ENCODE measurements at regions of chr14 and their contacts with region 1.

Region 1: GRCh38 chr14:103104654-103105452 is 10.3 kb downstream of the EXOC3L4 start:
- DNase-seq: peak; percentile 74
- H3K4me3 Mint-ChIP-seq: no peak overlapping the region
- H3K27ac Mint-ChIP-seq: no peak overlapping the region
- H3K4me1 Mint-ChIP-seq: peaks cover 7% of the 10 kb centered on the region
- H3K27me3 Mint-ChIP-seq: peaks cover 28% of the 10 kb centered on the region

Region 2: GRCh38 chr14:102351026-102351425 is 753.8 kb before region 1 on chr14:
- CTCF ChIA-PET with region 1: no interaction called
- POLR2A ChIA-PET with region 1: no interaction called
- intact Hi-C with region 1: no loop called
- DNase-seq: no peak
- H3K4me3 Mint-ChIP-seq: no peak overlapping the region
- H3K27ac Mint-ChIP-seq: no peak overlapping the region
- H3K4me1 Mint-ChIP-seq: peaks cover 2% of the 10 kb centered on the region
- H3K27me3 Mint-ChIP-seq: no peaks in the 10 kb centered on the region

Region 3: DNA sequence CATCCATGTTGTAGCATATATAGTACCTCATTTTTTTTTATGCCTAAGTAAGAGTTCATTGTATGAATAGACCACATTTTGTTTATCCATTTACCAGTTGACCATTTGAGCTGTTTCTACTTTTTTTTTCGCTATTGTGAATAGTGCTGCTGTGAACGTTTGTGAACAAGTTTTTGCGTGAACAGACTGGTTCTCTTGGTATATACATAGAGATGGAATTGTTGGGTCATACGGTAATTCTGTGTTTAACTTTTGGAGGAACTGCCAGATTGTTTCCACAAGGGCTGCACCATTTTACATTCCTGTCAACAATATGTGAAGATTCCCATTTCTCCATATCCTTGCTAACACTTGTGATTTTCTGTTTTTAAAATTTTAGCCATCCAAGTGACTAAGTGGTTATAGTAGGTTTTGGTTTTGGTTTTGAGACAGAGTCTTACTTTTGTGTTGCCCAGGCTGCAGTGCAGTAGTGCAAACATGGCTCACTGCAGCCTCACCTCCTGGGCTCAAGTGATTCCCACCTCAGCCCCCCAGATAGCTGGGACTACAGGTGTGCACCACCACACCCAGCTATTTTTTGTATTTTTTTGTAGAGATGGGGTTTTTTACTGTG is 250.7 kb before region 1 on chr14:
- CTCF ChIA-PET with region 1: no interaction called
- POLR2A ChIA-PET with region 1: no interaction called
- intact Hi-C with region 1: no loop called
- DNase-seq: no peak
- H3K4me3 Mint-ChIP-seq: no peak overlapping the region
- H3K27ac Mint-ChIP-seq: peak overlapping the region; percentile 39
- H3K4me1 Mint-ChIP-seq: peaks cover 22% of the 10 kb centered on the region
- H3K27me3 Mint-ChIP-seq: no peaks in the 10 kb centered on the region

Region 4: DNA sequence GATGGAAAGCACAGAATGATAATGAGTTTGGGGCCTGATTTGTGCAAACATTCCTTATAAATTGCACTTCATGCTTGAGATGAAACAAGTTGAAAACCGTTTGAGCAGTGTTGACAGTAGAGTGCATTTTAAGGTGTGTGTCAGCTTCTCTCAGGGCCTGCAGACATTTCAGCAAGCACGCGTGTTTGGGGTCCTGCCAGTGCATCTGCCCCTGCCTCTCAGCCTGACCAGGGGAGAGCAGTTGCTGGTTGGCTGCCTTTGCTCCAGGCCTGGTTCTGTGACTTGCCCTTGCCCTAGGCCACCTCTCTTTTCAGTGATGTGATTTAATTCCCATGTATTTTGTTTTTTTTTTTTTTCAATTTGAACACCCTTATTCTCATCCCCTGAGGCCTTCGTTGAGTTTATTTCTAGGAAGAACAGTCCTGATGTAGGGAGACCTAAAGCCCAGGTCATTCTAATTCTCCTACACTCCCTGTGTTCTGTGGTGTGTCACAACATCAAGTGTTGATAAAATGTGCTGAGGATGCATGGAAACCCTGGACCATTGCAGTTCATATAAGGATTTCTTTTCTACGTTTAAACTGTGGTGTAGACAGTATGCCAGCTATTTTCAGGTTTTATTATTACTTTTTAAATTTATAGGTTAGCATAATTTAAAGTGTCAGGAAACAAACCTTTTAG is 222.5 kb before region 1 on chr14:
- CTCF ChIA-PET with region 1: no interaction called
- POLR2A ChIA-PET with region 1: no interaction called
- intact Hi-C with region 1: no loop called
- DNase-seq: no peak
- H3K4me3 Mint-ChIP-seq: no peak overlapping the region
- H3K27ac Mint-ChIP-seq: peak overlapping the region; percentile 11
- H3K4me1 Mint-ChIP-seq: peaks cover 27% of the 10 kb centered on the region
- H3K27me3 Mint-ChIP-seq: no peaks in the 10 kb centered on the region

Region 5: GRCh38 chr14:103078093-103078749 is 26.6 kb before region 1 on chr14:
- CTCF ChIA-PET with region 1: interaction called, 31 read pairs
- POLR2A ChIA-PET with region 1: interaction called, 3 read pairs
- intact Hi-C with region 1: no loop called
- DNase-seq: peak; percentile 83
- H3K4me3 Mint-ChIP-seq: no peak overlapping the region
- H3K27ac Mint-ChIP-seq: no peak overlapping the region
- H3K4me1 Mint-ChIP-seq: no peaks in the 10 kb centered on the region
- H3K27me3 Mint-ChIP-seq: peaks cover 4% of the 10 kb centered on the region

Region 6: GRCh38 chr14:103130965-103131364 is 26.1 kb after region 1 on chr14:
- CTCF ChIA-PET with region 1: interaction called, 15 read pairs
- POLR2A ChIA-PET with region 1: no interaction called
- intact Hi-C with region 1: no loop called
- DNase-seq: no peak
- H3K4me3 Mint-ChIP-seq: no peak overlapping the region
- H3K27ac Mint-ChIP-seq: no peak overlapping the region
- H3K4me1 Mint-ChIP-seq: no peaks in the 10 kb centered on the region
- H3K27me3 Mint-ChIP-seq: peaks cover 5% of the 10 kb centered on the region

Region 7: GRCh38 chr14:103149351-103150237 is 44.7 kb after region 1 on chr14:
- CTCF ChIA-PET with region 1: interaction called, 16 read pairs
- POLR2A ChIA-PET with region 1: no interaction called
- intact Hi-C with region 1: no loop called
- DNase-seq: no peak
- H3K4me3 Mint-ChIP-seq: no peak overlapping the region
- H3K27ac Mint-ChIP-seq: no peak overlapping the region
- H3K4me1 Mint-ChIP-seq: no peaks in the 10 kb centered on the region
- H3K27me3 Mint-ChIP-seq: peaks cover 8% of the 10 kb centered on the region

Region 8: DNA sequence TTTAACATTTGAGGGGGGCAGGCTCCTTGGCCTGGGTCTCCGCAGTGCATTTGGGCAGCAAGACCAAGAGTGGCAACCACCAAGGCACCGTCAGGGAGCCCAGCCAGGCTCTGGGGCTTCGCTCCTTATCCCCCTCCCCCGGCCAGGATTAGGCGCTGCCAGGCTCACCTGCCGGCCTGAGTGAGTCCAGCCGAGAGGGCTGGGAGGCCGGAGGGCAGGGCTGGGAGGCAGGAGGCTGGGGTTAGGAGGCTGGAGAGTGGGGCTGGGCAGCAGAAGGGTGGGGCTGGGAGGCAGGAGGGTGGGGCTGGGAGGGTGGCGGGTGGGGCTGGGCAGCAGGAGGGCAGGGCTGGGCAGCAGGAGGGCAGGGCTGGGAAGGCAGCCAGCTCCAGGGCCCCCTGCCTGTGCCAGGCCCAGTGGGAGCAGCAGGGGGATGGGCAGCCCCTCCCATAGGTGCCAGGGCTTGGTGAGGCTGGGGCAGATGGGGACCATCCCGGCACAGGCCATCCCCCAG is 127.5 kb after region 1 on chr14:
- CTCF ChIA-PET with region 1: interaction called, 10 read pairs
- POLR2A ChIA-PET with region 1: no interaction called
- intact Hi-C with region 1: no loop called
- DNase-seq: no peak
- H3K4me3 Mint-ChIP-seq: no peak overlapping the region
- H3K27ac Mint-ChIP-seq: no peak overlapping the region
- H3K4me1 Mint-ChIP-seq: no peaks in the 10 kb centered on the region
- H3K27me3 Mint-ChIP-seq: peaks cover 17% of the 10 kb centered on the region

Region 9: DNA sequence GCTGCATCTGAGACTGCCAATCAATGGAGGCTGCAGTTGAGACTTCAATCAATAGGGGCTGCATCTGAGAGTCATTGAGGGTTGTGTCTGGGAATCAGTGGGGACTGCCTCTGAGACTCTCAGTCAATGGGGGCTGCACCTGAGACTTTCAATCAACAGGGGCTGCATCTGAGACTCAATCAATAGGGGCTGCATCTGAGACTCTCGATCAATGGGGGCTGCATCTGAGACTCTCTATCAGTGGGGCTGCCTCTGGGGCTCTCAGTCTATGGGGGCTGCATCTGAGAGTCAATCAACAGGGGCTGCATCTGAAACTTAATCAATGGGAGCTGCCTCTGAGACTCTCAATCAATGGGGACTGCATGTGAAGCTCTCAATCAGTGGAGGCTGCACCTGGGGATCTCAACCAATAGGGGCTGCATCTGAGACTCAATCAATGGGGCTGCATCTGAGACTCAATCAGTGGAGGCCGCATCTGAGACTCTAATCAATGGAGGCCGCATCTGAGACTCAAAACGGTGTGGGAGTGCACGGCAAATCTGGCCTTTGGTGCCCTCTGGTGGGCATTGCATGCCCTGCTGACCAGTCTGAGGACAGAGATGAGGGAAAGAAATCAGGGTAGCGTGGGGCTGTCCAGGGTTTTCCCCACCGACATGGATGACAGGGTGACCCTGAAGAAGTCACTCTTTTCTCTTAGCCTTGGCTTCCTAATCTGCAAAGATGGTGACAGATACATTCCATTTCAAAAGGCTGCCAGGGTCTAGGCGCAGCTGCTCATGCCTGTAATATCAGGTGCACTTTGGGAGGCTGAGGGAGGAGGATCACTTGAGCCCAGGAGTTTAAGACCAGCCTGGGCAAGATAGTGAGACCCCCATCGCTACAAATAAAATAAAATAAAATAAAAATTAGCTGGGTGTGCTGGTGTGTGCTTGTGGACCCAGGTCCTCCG is 187.8 kb after region 1 on chr14:
- CTCF ChIA-PET with region 1: interaction called, 101 read pairs
- POLR2A ChIA-PET with region 1: interaction called, 3 read pairs
- intact Hi-C with region 1: loop called (anchors 1 kb)
- DNase-seq: peak; percentile 85
- H3K4me3 Mint-ChIP-seq: no peak overlapping the region
- H3K27ac Mint-ChIP-seq: peak overlapping the region; percentile 28
- H3K4me1 Mint-ChIP-seq: peaks cover 4% of the 10 kb centered on the region
- H3K27me3 Mint-ChIP-seq: peaks cover 21% of the 10 kb centered on the region

Measured in activated CD4-positive, alpha-beta memory T cell treated with anti-CD3 and anti-CD28 coated beads for 36 hours (primary cell).